ENCODE measurements at regions of chr11 and their contacts with region 1.

Region 1: GRCh38 chr11:11265994-11266606 is 87.0 kb downstream of the CSNK2A3 start:
- DNase-seq: peak; percentile 29 to 73 (median 50)
- ATAC-seq: peak; percentile 63
- H3K4me3 ChIP-seq: no peak overlapping the region
- H3K4me3 Mint-ChIP-seq: no peak overlapping the region
- H3K27ac ChIP-seq: no peak overlapping the region
- H3K27ac Mint-ChIP-seq: no peak overlapping the region
- H3K4me1 ChIP-seq: no peaks in the 10 kb centered on the region
- H3K4me1 Mint-ChIP-seq: no peaks in the 10 kb centered on the region
- H3K27me3 ChIP-seq: no peaks in the 10 kb centered on the region
- H3K27me3 Mint-ChIP-seq: peaks cover 2% of the 10 kb centered on the region
- CTCF ChIP-seq: peak; percentile 60

Region 2: DNA sequence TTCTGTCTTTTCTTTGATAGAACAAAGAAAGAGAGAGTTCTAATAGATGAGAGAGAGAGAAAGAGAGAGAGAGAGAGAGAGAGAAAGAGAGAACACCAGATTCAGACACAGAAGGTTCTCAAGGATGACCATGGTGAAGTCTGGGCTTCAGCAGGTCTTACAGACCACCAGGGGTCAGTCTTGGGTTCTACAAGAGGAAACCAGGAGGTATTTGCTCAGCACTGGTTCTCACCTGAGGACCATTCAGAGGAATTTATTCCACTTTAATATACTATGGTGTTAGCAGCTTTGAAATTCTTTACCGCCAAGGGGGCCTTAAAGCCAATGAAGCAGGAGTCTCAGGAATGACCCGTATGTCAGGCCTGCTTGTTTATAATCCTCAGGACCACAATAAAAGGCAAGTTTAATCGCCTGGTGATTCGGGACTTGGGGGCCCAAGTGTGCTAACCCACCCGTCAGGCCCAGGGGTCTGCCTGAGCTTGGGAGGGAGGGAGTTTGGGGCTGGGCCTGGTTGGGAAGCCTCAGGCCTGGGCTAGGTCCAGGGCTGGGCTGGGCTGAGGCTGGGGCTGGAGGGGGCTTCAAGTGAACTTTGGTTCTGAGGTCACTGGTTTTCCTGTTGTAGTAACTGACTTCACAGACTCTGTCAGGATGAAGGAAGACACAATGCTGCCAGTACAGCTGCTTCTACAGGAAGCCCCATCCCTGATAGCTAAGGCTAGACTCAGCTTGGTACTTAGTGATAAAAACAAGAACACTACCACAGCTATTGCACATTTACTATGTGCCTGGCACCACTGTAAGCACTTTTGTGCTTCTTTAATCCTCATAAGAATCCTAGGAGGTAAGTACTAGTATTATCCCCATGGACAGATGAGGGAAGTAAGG is 229.0 kb before region 1 on chr11:
- CTCF ChIA-PET with region 1: no interaction called
- POLR2A ChIA-PET with region 1: no interaction called
- intact Hi-C with region 1: loop called in 1 of 2 experiments (anchors 2 kb)
- DNase-seq: peak in 8 of 14 experiments; percentile 11 to 86 (median 35)
- ATAC-seq: peak; percentile 93
- H3K4me3 ChIP-seq: no peak overlapping the region
- H3K4me3 Mint-ChIP-seq: no peak overlapping the region
- H3K27ac ChIP-seq: no peak overlapping the region
- H3K27ac Mint-ChIP-seq: peak overlapping the region; percentile 78
- H3K4me1 ChIP-seq: peaks cover 14% of the 10 kb centered on the region
- H3K4me1 Mint-ChIP-seq: peaks cover 22% of the 10 kb centered on the region
- H3K27me3 ChIP-seq: no peaks in the 10 kb centered on the region
- H3K27me3 Mint-ChIP-seq: no peaks in the 10 kb centered on the region
- CTCF ChIP-seq: peak; percentile 62

Region 3: GRCh38 chr11:11207428-11207827 is 58.7 kb before region 1 on chr11:
- CTCF ChIA-PET with region 1: no interaction called
- POLR2A ChIA-PET with region 1: no interaction called
- intact Hi-C with region 1: loop called in 1 of 2 experiments (anchors 10 kb)
- DNase-seq: peak in 2 of 14 experiments; percentile 15 to 45
- ATAC-seq: no peak
- H3K4me3 ChIP-seq: no peak overlapping the region
- H3K4me3 Mint-ChIP-seq: no peak overlapping the region
- H3K27ac ChIP-seq: no peak overlapping the region
- H3K27ac Mint-ChIP-seq: no peak overlapping the region
- H3K4me1 ChIP-seq: no peaks in the 10 kb centered on the region
- H3K4me1 Mint-ChIP-seq: no peaks in the 10 kb centered on the region
- H3K27me3 ChIP-seq: no peaks in the 10 kb centered on the region
- H3K27me3 Mint-ChIP-seq: peaks cover 44% of the 10 kb centered on the region
- CTCF ChIP-seq: no peak

Region 4: DNA sequence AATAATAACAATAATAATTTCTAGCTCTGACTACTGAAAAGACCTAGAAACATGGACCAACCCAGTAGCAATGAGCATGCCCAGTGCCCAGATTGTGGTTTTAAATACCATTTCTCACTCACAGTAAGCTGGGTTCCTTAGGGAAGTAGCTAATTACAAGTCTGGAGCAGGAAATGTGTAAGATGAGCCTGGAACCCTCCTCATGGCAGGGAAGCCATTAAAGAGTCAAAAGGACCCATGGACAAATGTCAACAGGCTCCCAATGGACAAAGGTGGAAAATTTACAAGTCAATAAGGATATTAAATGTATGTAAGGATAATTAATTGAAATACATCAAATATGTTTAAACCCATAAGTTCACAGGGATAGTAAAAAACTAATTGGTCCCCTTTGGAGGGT is 97.6 kb after region 1 on chr11:
- CTCF ChIA-PET with region 1: no interaction called
- POLR2A ChIA-PET with region 1: no interaction called
- intact Hi-C with region 1: no loop called
- DNase-seq: no peak
- ATAC-seq: no peak
- H3K4me3 ChIP-seq: no peak overlapping the region
- H3K4me3 Mint-ChIP-seq: no peak overlapping the region
- H3K27ac ChIP-seq: no peak overlapping the region
- H3K27ac Mint-ChIP-seq: no peak overlapping the region
- H3K4me1 ChIP-seq: no peaks in the 10 kb centered on the region
- H3K4me1 Mint-ChIP-seq: no peaks in the 10 kb centered on the region
- H3K27me3 ChIP-seq: no peaks in the 10 kb centered on the region
- H3K27me3 Mint-ChIP-seq: peaks cover 25% of the 10 kb centered on the region
- CTCF ChIP-seq: no peak

Measured in CD4-positive, alpha-beta T cell (primary cell).